Activated CD4-positive, alpha-beta T cell treated with anti-CD3 and anti-CD28 coated beads, Interleukin-2, amount 10 ng/mL, durations not matched to agents 24 days and 14 days (primary cell): ENCODE measurements at regions of chr19 and their contacts with region 1.

Region 1: DNA sequence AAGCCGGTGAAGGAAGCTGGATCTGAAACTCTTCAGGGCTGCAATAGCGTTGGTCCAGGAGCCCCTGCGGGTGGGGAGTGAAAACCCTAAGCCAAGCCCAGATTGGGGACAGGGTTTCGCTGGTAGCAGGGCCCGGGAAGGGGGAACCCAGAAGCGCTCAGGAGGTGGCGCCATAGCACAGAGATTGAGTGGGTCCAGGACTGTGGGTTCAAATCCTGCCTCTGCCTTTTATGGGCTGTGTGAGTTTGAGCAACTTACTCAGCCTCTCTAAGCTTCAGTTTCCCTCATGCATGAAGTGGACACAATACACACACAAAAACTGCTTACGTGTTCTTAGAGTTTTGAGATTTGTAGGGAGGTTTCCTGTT is 8.3 kb upstream of the SYCN start:
- DNase-seq: peak; percentile 89
- H3K4me3 Mint-ChIP-seq: no peak overlapping the region
- H3K27ac Mint-ChIP-seq: no peak overlapping the region
- H3K4me1 Mint-ChIP-seq: no peaks in the 10 kb centered on the region
- H3K27me3 Mint-ChIP-seq: peaks cover 10% of the 10 kb centered on the region

Region 2: DNA sequence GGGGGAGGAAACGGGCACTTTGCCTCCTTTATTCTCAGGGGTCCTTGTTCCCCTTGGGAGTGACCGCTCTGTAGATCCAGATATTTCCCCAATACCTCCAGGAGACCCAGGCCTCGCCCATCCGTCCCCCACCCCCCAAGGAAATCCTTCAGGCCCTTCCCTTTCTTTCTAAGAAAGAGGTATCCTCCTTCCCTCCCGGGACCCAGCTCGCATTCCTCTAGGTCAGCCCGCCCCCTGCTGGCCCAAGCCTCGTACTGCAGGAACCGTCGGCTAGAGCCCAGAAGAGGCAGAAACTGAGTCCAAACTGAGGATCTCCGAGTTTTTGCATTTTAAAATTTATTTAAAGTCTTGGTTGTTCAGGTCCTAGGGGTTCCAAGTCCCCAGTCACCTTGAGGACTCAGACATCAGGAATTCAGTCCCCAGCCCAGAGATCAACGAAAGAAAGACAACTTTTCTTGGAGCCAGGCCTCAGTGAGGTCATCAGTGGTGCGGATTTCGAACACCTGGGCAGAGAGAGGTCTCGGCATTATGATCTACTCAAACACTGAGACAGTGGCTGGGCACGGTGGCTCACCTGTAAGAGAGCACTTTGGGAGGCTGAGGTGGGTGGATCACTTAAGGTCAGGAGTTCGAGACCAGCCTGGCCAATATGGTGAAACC is 115.8 kb after region 1 on chr19:
- intact Hi-C with region 1: loop called (anchors 1 kb)
- DNase-seq: peak; percentile 95
- H3K4me3 Mint-ChIP-seq: no peak overlapping the region
- H3K27ac Mint-ChIP-seq: peak overlapping the region; percentile 45
- H3K4me1 Mint-ChIP-seq: peaks cover 27% of the 10 kb centered on the region
- H3K27me3 Mint-ChIP-seq: no peaks in the 10 kb centered on the region